ENCODE measurements at regions of chr5 and their contacts with region 1.

Region 1: GRCh38 chr5:1004461-1005248 is 3.9 kb upstream of the NKD2 start:
- DNase-seq: peak; percentile 61 to 76
- ATAC-seq: peak; percentile 60 to 79
- H3K4me3 ChIP-seq: peak overlapping the region; percentile 63
- H3K27ac ChIP-seq: peak overlapping the region; percentile 89 to 92
- H3K4me1 ChIP-seq: peaks cover 16% of the 10 kb centered on the region
- CTCF ChIP-seq: peak; percentile 79
- EP300 ChIP-seq: no peak
- POLR2A ChIP-seq: peak; percentile 38; the same call in 1 of the 2 replicates
- RAD21 ChIP-seq: peak; percentile 35 to 59

Region 2: DNA sequence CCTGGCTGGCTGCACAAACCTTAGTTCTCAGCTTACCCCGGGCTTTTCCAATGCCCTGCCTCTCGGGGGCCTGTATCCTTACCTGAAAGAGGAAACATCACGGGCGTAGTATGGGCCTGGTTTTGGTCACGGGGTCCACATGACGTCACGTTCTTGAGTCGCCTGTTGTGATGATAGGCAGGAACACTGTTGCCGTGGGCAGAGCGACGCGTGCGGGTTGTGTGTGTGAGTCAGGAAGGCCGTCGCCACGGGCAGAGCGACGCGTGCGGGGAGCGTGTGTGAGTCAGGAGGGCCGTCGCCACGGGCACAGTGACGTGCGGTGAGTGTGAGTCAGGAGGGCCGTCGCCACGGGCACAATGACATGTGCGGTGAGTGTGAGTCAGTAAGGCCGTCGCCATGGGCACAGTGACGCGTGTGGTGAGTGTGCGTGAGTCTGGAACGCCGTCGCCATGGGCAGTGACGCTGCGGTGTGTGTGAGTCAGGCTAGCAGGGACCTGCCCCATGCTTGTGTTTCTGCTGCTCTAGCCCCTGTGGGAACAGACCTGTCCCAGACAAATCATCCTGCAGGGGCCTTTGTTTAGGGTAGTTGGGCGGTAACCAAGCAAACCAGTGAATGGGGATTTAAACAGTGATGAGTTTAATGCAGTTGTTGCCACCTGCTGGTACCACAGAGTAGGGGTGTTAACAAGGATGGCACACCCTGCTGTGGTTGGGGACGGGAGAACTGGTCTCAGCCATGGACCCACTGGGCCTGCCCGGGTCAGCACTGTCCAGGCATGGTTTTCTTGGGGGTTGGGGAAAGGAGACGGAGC is 92.2 kb before region 1 on chr5:
- CTCF ChIA-PET with region 1: interaction called, 10 read pairs
- POLR2A ChIA-PET with region 1: no interaction called
- DNase-seq: peak; percentile 96 to 98
- ATAC-seq: peak; percentile 95 to 96
- H3K4me3 ChIP-seq: 0 out of 3 replicates have a peak overlapping the region, but pooled peaks have one; percentile 2
- H3K27ac ChIP-seq: peak overlapping the region; percentile 60 to 83
- H3K4me1 ChIP-seq: peaks cover 24% of the 10 kb centered on the region
- CTCF ChIP-seq: peak; percentile 47
- EP300 ChIP-seq: peak; percentile 54 to 83; a peak in 3 of 5 replicates
- POLR2A ChIP-seq: no peak
- RAD21 ChIP-seq: peak in 1 of 2 experiments; percentile 27; a peak in 2 of 5 replicates

Region 3: DNA sequence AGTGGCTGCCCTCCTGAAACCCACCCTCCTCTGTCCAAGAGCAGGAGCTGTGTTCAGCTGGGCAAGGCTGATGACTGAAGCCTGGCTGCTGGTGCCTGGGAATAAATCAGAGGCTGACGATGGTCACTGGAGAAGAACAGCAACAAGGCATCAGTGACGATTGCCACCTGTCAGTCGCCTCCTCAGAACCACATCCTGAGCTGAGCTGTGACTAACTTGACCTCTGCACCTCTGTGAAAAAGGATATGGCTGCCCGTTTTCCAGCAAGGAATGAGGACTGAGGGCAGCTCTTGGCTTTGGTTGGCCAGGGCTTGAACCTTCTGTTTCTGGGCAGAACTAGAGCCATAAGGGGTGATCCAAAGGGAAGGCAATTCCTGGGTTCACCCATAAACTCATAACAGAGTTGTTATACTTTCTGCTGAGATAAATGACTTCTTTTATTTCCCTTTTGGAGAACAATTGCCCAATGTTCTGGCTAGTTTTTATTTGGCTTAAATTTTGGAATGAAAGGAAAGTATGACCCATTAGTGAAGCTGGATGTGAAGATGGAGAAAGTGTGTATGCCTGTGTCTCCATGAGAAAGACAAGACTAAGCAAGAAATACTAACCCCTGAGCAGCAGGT is 71.9 kb before region 1 on chr5:
- CTCF ChIA-PET with region 1: interaction called, 32 read pairs
- POLR2A ChIA-PET with region 1: no interaction called
- DNase-seq: no peak
- ATAC-seq: no peak
- H3K4me3 ChIP-seq: no peak overlapping the region
- H3K27ac ChIP-seq: no peak overlapping the region
- H3K4me1 ChIP-seq: no peaks in the 10 kb centered on the region
- CTCF ChIP-seq: no peak
- EP300 ChIP-seq: no peak
- POLR2A ChIP-seq: no peak
- RAD21 ChIP-seq: no peak

Region 4: GRCh38 chr5:989961-990530 is 14.6 kb before region 1 on chr5:
- CTCF ChIA-PET with region 1: interaction called, 12 read pairs
- POLR2A ChIA-PET with region 1: no interaction called
- DNase-seq: no peak
- ATAC-seq: peak in 1 of 2 experiments; percentile 70; a peak in 3 of 6 replicates
- H3K4me3 ChIP-seq: no peak overlapping the region
- H3K27ac ChIP-seq: no peak overlapping the region
- H3K4me1 ChIP-seq: no peaks in the 10 kb centered on the region
- CTCF ChIP-seq: no peak
- EP300 ChIP-seq: no peak
- POLR2A ChIP-seq: no peak
- RAD21 ChIP-seq: peak; percentile 18 to 26; a peak in 1 of 5 replicates

Region 5: GRCh38 chr5:1020452-1020961 is 15.9 kb after region 1 on chr5:
- CTCF ChIA-PET with region 1: interaction called, 11 read pairs
- POLR2A ChIA-PET with region 1: no interaction called
- DNase-seq: no peak
- ATAC-seq: peak in 1 of 2 experiments; percentile 14; a peak in 2 of 6 replicates
- H3K4me3 ChIP-seq: no peak overlapping the region
- H3K27ac ChIP-seq: no peak overlapping the region
- H3K4me1 ChIP-seq: no peaks in the 10 kb centered on the region
- CTCF ChIP-seq: no peak
- EP300 ChIP-seq: no peak
- POLR2A ChIP-seq: no peak
- RAD21 ChIP-seq: no peak

Region 6: DNA sequence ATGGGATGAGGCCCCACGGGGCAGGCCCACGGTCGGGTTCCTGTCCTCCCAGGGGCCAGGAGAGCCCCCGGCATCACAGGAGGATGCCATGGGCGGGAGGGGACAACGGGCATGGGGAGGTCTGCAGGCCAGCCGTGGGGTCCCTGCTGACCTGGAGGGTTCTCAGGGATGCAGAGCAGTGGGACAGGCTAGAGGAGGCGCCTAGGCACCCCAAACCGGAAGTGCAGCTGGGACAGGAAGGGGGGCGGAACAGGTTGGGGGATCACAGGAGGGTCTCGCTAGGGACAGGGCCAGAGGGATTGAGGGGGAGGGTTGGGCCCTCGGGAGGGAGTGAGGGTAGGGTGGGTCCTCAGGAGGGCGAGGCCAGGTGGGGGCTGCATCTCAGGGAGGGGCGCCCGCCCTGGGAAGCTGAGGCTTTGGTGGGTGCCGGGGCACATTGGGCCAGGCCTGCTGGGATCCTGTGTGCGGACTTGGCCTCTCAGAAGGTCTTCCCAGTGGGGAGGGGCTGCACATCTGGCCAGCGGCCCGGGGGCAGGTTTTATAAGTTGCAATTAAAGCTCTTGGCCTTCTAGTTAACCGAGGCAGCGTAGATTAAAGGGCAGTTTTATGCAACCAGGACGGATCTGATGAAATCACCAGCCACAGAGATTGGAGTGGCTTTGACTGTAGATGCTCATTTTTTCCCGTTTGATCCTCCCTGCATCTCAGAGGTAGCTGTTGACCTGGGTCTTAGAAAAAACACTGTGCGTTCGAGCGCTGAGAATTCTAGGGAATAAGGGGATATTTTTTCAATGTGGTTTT is 24.0 kb after region 1 on chr5:
- CTCF ChIA-PET with region 1: interaction called, 14 read pairs
- POLR2A ChIA-PET with region 1: no interaction called
- DNase-seq: no peak
- ATAC-seq: no peak
- H3K4me3 ChIP-seq: no peak overlapping the region
- H3K27ac ChIP-seq: no peak overlapping the region
- H3K4me1 ChIP-seq: no peaks in the 10 kb centered on the region
- CTCF ChIP-seq: no peak
- EP300 ChIP-seq: no peak
- POLR2A ChIP-seq: no peak
- RAD21 ChIP-seq: no peak

Region 7: GRCh38 chr5:1174122-1174936 is 169.7 kb after region 1 on chr5:
- CTCF ChIA-PET with region 1: interaction called, 47 read pairs
- POLR2A ChIA-PET with region 1: no interaction called
- DNase-seq: peak; percentile 79 to 87
- ATAC-seq: peak; percentile 83 to 91
- H3K4me3 ChIP-seq: peak overlapping the region; percentile 33; the same call in 2 of the 3 replicates
- H3K27ac ChIP-seq: peak overlapping the region; percentile 73 to 74
- H3K4me1 ChIP-seq: peaks cover 5% of the 10 kb centered on the region
- CTCF ChIP-seq: peak; percentile 81
- EP300 ChIP-seq: no peak
- POLR2A ChIP-seq: no peak
- RAD21 ChIP-seq: peak; percentile 72 to 73

Measured in A549 (cell line).